Transverse colon (tissue), 4 donors: ENCODE measurements at regions of chr5 and their contacts with region 1.

Region 1: DNA sequence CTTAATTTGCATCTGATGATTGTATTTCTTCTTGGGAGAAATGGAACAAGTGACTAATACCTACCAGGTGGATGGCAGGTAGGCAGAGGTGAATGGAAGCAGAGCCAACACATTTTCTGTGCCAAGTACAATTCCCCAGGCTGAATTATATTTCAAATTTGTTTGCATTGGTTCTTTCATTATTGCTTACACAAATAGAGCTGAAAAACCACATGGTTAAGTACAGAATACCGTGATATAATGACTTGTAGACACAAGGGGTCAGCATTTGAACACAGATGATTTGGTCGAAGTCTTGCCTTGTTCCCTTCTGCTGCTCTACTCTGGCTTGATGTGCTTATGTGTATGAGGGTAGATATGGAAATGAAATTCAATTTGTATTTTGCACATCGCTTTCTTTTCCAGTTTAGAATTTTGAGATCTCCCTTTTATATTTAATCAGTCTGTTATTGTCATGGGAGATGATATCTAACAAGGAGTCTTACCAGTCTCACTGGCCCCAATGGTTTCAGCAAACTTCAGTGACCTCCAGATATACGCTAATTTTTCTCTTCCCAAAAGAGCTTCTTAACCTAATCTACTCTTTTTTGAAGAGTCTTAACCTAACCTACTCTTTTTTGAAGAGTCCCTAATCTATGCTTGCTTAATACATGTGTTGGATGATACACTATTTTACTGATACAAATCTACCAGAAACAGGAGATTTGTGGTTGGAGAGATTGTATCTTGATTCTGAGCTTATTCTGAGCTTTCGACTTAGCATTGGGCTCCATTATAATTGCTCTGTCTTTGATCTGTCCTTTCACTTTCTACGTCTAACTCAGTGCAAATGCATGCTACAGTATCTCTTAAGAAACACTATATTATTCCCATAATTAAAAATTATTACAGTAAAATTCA is 88.1 kb downstream of the PCSK1 start:
- DNase-seq: peak; percentile 35
- H3K4me3 ChIP-seq: no peak overlapping the region
- H3K27ac ChIP-seq: no peak overlapping the region
- H3K4me1 ChIP-seq: no peaks in the 10 kb centered on the region
- H3K27me3 ChIP-seq: no peaks in the 10 kb centered on the region
- CTCF ChIP-seq: peak; percentile 42 to 70 (median 48)
- EP300 ChIP-seq: no peak
- POLR2A ChIP-seq: no peak

Region 2: GRCh38 chr5:96054311-96055030 is 290.5 kb before region 1 on chr5:
- in situ Hi-C with region 1: no loop called
- intact Hi-C with region 1: no loop called
- DNase-seq: no peak
- H3K4me3 ChIP-seq: no peak overlapping the region
- H3K27ac ChIP-seq: no peak overlapping the region
- H3K4me1 ChIP-seq: no peaks in the 10 kb centered on the region
- H3K27me3 ChIP-seq: no peaks in the 10 kb centered on the region
- CTCF ChIP-seq: no peak
- EP300 ChIP-seq: no peak
- POLR2A ChIP-seq: no peak

Region 3: DNA sequence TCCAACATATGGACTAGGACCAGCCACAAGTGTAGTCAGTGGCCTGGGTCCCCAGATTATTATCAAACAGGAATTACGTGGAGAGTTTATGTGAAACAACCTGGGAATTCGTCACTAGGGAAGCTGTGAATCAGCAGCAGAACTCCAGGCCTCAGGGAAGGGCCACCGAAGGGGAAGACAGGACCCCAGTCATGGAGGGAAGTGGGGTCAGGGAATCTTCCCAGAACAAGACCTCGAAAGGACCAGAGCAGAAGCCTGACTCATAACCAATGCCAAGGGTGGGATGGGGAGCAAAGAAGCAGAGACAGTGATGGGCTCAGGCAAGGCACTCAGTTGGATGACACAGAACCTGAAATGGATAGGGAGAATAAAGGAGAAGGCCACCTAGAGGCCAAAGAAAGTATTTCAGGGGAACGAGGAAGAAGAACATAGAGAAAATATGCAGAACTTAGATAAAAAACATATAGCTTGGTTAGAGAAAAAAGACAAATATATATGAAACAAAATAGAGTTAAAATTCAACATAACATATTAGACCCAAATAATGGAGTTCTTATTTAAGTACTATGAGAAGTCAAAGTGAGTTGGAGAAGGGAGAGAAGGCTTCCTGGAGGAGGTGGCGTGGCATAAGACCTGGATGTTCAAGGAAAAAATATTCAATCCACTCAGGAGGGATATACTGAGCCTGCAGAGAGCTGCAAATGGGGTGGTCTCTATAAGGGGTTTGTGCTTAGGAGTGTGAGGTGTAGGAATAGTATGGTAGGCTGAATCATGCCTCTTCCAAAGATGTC is 250.6 kb after region 1 on chr5:
- in situ Hi-C with region 1: loop called in 3 of 4 experiments (anchors 5 to 10 kb)
- intact Hi-C with region 1: loop called (anchors 5 kb)
- DNase-seq: no peak
- H3K4me3 ChIP-seq: no peak overlapping the region
- H3K27ac ChIP-seq: no peak overlapping the region
- H3K4me1 ChIP-seq: peaks cover 0 to 8% (median 2%) of the 10 kb centered on the region in 4 donors
- H3K27me3 ChIP-seq: no peaks in the 10 kb centered on the region
- CTCF ChIP-seq: peak; percentile 33 to 55 (median 39)
- EP300 ChIP-seq: no peak
- POLR2A ChIP-seq: no peak

Region 4: GRCh38 chr5:96601811-96602244 is 256.9 kb after region 1 on chr5:
- in situ Hi-C with region 1: loop called (anchors 5 to 10 kb)
- intact Hi-C with region 1: loop called (anchors 5 kb)
- DNase-seq: peak; percentile 33
- H3K4me3 ChIP-seq: no peak overlapping the region
- H3K27ac ChIP-seq: no peak overlapping the region
- H3K4me1 ChIP-seq: no peaks in the 10 kb centered on the region
- H3K27me3 ChIP-seq: no peaks in the 10 kb centered on the region
- CTCF ChIP-seq: peak; percentile 77 to 86 (median 83)
- EP300 ChIP-seq: no peak
- POLR2A ChIP-seq: no peak

Region 5: GRCh38 chr5:96614110-96614691 is 269.3 kb after region 1 on chr5:
- in situ Hi-C with region 1: loop called in 1 of 4 experiments (anchors 5 kb)
- intact Hi-C with region 1: no loop called
- DNase-seq: peak; percentile 60
- H3K4me3 ChIP-seq: no peak overlapping the region
- H3K27ac ChIP-seq: peak overlapping the region; percentile 10 to 59 (median 50)
- H3K4me1 ChIP-seq: peaks cover 0 to 19% (median 9%) of the 10 kb centered on the region in 4 donors
- H3K27me3 ChIP-seq: no peaks in the 10 kb centered on the region
- CTCF ChIP-seq: peak; percentile 51 to 79 (median 55)
- EP300 ChIP-seq: no peak
- POLR2A ChIP-seq: no peak